Cardiac septum (tissue), 1 donor: ENCODE measurements at regions of chr2 and their contacts with region 1.

Region 1: DNA sequence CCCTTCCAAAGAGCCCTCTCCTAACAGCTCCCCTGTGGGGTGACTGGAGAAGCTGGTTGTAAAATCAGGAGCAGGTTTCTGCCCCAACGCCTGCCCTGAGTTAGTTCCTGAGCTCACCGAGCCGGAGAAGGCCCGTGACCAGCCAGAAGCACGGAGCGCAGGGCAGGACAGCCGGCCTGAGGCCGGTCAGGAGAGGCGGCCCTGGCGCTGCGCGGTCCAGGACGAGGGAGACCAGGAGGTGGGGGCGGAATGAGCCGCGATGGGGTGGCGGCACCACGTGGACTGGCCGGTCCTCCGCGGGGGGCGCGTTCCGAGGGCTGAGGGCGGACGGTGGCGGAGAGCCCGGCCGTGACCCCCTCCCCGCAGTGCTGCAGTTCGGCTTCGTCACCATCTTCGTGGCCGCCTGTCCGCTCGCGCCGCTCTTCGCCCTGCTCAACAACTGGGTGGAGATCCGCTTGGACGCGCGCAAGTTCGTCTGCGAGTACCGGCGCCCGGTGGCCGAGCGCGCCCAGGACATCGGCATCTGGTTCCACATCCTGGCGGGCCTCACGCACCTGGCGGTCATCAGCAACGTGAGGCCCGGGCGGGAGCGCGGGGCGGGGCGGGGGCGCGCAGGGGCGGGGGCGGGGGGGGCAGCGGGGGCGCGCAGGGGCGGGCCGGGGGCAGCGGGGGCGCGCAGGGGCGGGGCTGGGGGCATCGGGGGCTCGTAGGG is 29.0 kb downstream of the ANO7 start:
- DNase-seq: peak; percentile 84

Region 2: DNA sequence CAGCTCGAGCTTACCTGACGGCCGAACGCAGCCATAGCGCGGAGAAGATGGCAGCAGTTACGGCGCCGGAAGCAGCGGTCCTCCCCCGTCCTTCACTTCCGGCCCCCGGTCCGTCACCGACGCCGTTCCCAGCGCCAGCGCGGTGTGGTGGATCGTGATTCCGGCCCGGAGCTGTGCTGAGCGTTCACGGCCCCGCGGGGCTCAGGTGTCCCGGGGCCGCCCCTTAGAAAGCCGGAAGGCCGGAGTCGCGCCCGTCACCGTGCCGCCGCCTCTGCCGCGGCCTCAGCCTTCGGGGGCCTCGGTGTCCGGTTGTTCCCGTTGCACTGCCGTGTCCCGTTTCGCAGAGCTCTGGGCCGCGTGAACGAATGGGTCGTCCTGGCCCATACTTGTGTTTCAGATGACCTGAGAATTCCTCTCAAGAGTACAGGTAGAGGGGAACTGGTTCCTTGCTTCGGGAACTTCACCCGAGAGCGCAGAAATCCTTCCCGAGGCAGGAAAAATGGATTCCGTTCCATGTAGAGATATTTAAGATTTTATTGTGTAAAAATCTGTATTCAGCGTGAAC is 115.2 kb before region 1 on chr2 and contains the start of gene MTERF4:
- intact Hi-C with region 1: loop called (anchors 5 kb)
- DNase-seq: peak; percentile 93
- total RNA-seq, gene MTERF4: 21.0 TPM

Region 3: GRCh38 chr2:241156971-241157441 is 60.5 kb before region 1 on chr2:
- intact Hi-C with region 1: loop called (anchors 5 kb)
- DNase-seq: no peak

Region 4: GRCh38 chr2:241289597-241289996 is 72.1 kb after region 1 on chr2:
- intact Hi-C with region 1: no loop called
- DNase-seq: no peak